ENCODE measurements at regions of chr18 and their contacts with region 1.

Region 1: GRCh38 chr18:45664824-45665763 is 49.8 kb downstream of the SLC14A2 start:
- DNase-seq: no peak
- ATAC-seq: peak; percentile 55

Region 2: DNA sequence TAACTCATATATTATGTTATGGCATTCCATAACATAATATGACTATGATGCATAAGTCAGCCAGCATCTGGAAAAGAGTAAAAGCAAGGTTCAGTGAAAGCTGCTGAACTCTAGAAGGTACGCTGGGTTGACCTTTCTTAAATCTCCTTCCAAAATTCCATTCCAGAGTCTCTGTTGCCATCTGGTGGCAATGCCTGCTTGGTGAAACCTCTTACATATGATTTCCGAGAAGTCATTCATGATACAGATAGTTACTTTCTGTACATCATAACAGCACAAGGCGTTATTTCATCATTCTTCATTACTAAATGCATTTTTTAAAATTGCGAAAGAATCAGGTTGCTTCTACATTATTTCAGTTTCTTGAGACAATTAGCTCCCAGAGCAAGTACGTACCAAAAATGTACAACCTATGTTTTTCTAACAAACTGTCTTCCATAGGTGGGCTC is 309.0 kb after region 1 on chr18:
- intact Hi-C with region 1: loop called (anchors 5 kb)
- DNase-seq: no peak
- ATAC-seq: peak; percentile 64

Region 3: DNA sequence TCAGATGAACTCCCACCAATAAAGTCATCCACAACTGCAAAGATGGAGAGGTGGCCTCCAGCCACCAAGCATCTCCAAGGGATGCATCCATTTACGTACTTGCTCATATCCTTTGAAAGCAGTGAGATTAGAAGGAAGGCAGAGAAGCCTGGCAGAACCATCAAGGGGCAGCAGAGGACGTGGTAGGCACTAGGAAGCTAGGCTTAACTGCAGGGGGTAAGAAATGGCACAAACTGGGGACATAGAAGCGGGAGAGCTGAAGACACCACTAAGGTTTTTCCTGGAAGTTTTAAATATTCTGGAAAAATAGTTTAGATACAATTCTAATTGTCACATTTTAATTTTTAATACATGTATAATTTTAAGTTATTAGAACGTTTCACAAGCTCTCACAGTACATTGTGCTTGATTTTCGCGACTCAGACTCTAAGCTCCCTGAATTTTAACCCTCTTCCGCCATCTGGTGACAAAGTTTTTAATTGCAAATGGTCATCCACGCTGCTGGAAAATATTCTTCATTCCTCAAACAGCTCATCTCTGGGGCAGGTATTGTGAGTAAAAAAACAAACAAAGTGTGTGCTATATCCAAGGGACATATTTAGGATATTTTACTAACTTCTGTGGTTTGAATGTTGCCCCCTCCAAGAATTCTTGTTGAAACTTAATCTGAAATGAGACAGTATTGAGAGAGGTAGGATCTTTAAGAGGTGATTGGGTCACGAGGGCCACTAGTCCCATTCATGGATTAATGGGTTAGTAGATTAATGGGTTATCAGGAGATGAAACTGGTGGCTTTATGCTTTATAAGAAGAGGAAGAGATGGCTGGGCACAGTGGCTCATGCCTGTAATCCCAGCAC is 408.6 kb after region 1 on chr18:
- intact Hi-C with region 1: loop called (anchors 5 kb)
- DNase-seq: no peak
- ATAC-seq: peak; percentile 39

Measured in Right ventricle myocardium inferior (tissue), 1 donor.